Left ventricle myocardium superior (tissue), 1 donor: ENCODE measurements at regions of chrX and their contacts with region 1.

Region 1: GRCh38 chrX:78103623-78104446 is at the start of gene PGK1:
- DNase-seq: peak; percentile 97
- ATAC-seq: peak; percentile 98
- total RNA-seq, gene PGK1: 448 TPM

Region 2: GRCh38 chrX:77900688-77901087 is 203.1 kb before region 1 on chrX:
- intact Hi-C with region 1: loop called (anchors 10 kb)
- DNase-seq: no peak
- ATAC-seq: no peak

Region 3: DNA sequence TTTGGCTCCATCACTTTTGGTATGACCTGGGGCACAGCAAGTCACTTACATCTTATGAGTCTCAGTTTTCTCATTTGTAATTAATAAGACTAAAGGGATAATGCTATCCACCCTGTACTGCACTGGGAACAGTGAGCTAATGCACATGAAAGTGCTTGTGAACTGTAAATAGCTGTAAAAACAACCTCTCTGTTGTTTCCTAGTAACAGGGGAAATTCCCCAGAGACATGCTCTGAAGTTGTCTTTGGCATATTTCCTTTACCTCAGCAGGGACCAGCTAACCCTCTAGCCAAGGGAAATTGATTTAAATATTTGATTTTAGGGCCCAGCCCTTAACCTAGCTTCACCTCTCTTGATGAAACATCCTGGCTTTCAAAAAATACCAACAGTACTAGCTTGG is 229.7 kb after region 1 on chrX:
- intact Hi-C with region 1: no loop called
- DNase-seq: no peak
- ATAC-seq: no peak